B cell (primary cell): ENCODE measurements at regions of chr4 and their contacts with region 1.

Region 1: DNA sequence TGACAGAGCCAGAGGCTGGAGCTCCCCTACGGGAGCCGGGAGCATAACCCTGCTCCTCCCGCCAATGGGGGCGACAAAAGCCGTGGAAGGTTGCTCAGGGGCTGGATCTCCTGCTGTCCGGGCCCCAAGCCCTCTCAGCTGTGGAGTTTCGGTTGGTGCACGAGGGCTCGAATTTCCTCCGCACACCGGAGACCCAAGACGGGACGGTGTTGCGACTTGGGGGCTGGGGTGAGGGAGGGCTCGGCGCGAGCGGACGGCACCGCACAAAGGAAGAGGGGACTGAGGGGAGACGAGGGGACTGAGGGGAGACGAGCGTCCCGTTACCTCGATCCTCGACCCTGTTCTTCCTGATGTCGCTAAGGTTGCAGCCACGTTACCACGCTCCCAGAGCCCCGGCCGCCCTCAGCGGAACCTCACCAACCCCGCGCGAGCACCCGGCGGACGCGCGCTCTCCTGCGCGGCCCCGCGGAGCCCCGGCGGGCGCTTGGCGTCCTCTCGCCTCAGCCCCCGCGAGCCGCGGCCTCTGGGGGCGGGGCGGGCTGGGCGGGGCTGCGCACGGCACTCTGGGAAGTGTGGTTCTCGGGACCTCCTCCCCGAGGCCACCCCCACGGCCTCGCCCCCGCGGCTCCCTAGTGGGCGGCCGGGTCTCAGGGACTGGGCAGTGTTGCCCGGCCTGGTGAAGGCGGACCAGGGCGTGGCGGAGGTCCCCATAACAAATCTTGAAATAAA is at the start of gene KLHL8:
- DNase-seq: peak; percentile 92
- ATAC-seq: peak; percentile 93
- H3K4me3 ChIP-seq: peak within 1 kb of the TSS; percentile 76 to 100 (median 93)
- H3K4me3 Mint-ChIP-seq: peak within 1 kb of the TSS; percentile 98
- H3K27ac ChIP-seq: peak within 1 kb of the TSS; percentile 80 to 85
- H3K27ac Mint-ChIP-seq: peak within 1 kb of the TSS; percentile 96
- H3K4me1 ChIP-seq: peaks cover 7% of the 10 kb centered on the region in 2 donors
- H3K4me1 Mint-ChIP-seq: peaks cover 16% of the 10 kb centered on the region
- H3K27me3 ChIP-seq: no peaks in the 10 kb centered on the region
- H3K27me3 Mint-ChIP-seq: no peaks in the 10 kb centered on the region
- CTCF ChIP-seq: no peak
- total RNA-seq, gene KLHL8: 12.4 and 14.3 TPM in 2 replicates

Region 2: GRCh38 chr4:86359944-86360478 is 860.2 kb before region 1 on chr4 and contains the start of gene MAPK10:
- CTCF ChIA-PET with region 1: no interaction called
- POLR2A ChIA-PET with region 1: no interaction called
- intact Hi-C with region 1: loop called (anchors 5 kb)
- DNase-seq: peak; percentile 95
- ATAC-seq: peak; percentile 97
- H3K4me3 ChIP-seq: peak within 1 kb of the TSS; percentile 38 to 63 (median 56)
- H3K4me3 Mint-ChIP-seq: peak within 1 kb of the TSS; percentile 90
- H3K27ac ChIP-seq: peak within 1 kb of the TSS; percentile 50 to 74
- H3K27ac Mint-ChIP-seq: peak within 1 kb of the TSS; percentile 91
- H3K4me1 ChIP-seq: peaks cover 8 to 10% of the 10 kb centered on the region in 2 donors
- H3K4me1 Mint-ChIP-seq: peaks cover 19% of the 10 kb centered on the region
- H3K27me3 ChIP-seq: no peaks in the 10 kb centered on the region
- H3K27me3 Mint-ChIP-seq: no peaks in the 10 kb centered on the region
- CTCF ChIP-seq: no peak
- total RNA-seq, gene MAPK10: 3.1 and 3.7 TPM in 2 replicates

Region 3: GRCh38 chr4:87209696-87210095 is 10.6 kb before region 1 on chr4:
- CTCF ChIA-PET with region 1: interaction called, 14 read pairs
- POLR2A ChIA-PET with region 1: interaction called, 13 read pairs
- intact Hi-C with region 1: loop called (anchors 1 kb)
- DNase-seq: peak; percentile 75
- ATAC-seq: peak; percentile 93
- H3K4me3 ChIP-seq: peak overlapping the region in 4 of 5 experiments; percentile 34 to 75 (median 48)
- H3K4me3 Mint-ChIP-seq: peak overlapping the region; percentile 85
- H3K27ac ChIP-seq: peak overlapping the region; percentile 3 to 56
- H3K27ac Mint-ChIP-seq: peak overlapping the region; percentile 83
- H3K4me1 ChIP-seq: peaks cover 7 to 11% of the 10 kb centered on the region in 2 donors
- H3K4me1 Mint-ChIP-seq: peaks cover 16% of the 10 kb centered on the region
- H3K27me3 ChIP-seq: no peaks in the 10 kb centered on the region
- H3K27me3 Mint-ChIP-seq: no peaks in the 10 kb centered on the region
- CTCF ChIP-seq: no peak

Region 4: GRCh38 chr4:87235020-87235671 is 14.9 kb after region 1 on chr4:
- CTCF ChIA-PET with region 1: interaction called, 8 read pairs
- POLR2A ChIA-PET with region 1: no interaction called
- intact Hi-C with region 1: loop called (anchors 1 kb)
- DNase-seq: peak; percentile 12
- ATAC-seq: no peak
- H3K4me3 ChIP-seq: peak overlapping the region in 4 of 5 experiments; percentile 35 to 66 (median 44)
- H3K4me3 Mint-ChIP-seq: peak overlapping the region; percentile 74
- H3K27ac ChIP-seq: no peak overlapping the region
- H3K27ac Mint-ChIP-seq: no peak overlapping the region
- H3K4me1 ChIP-seq: peaks cover 0 to 6% of the 10 kb centered on the region in 2 donors
- H3K4me1 Mint-ChIP-seq: peaks cover 4% of the 10 kb centered on the region
- H3K27me3 ChIP-seq: no peaks in the 10 kb centered on the region
- H3K27me3 Mint-ChIP-seq: peaks cover 5% of the 10 kb centered on the region
- CTCF ChIP-seq: no peak

Region 5: GRCh38 chr4:87422104-87423052 is 202.1 kb after region 1 on chr4 and contains the start of gene NUDT9:
- CTCF ChIA-PET with region 1: no interaction called
- POLR2A ChIA-PET with region 1: no interaction called
- intact Hi-C with region 1: loop called (anchors 5 kb)
- DNase-seq: peak; percentile 93
- ATAC-seq: peak; percentile 85
- H3K4me3 ChIP-seq: peak within 1 kb of the TSS; percentile 86 to 97 (median 89)
- H3K4me3 Mint-ChIP-seq: peak within 1 kb of the TSS; percentile 100
- H3K27ac ChIP-seq: peak within 1 kb of the TSS; percentile 80 to 92
- H3K27ac Mint-ChIP-seq: peak within 1 kb of the TSS; percentile 100
- H3K4me1 ChIP-seq: peaks cover 16 to 26% of the 10 kb centered on the region in 2 donors
- H3K4me1 Mint-ChIP-seq: peaks cover 40% of the 10 kb centered on the region
- H3K27me3 ChIP-seq: no peaks in the 10 kb centered on the region
- H3K27me3 Mint-ChIP-seq: no peaks in the 10 kb centered on the region
- CTCF ChIP-seq: no peak
- total RNA-seq, gene NUDT9: 17.5 and 21.5 TPM in 2 replicates

Region 6: DNA sequence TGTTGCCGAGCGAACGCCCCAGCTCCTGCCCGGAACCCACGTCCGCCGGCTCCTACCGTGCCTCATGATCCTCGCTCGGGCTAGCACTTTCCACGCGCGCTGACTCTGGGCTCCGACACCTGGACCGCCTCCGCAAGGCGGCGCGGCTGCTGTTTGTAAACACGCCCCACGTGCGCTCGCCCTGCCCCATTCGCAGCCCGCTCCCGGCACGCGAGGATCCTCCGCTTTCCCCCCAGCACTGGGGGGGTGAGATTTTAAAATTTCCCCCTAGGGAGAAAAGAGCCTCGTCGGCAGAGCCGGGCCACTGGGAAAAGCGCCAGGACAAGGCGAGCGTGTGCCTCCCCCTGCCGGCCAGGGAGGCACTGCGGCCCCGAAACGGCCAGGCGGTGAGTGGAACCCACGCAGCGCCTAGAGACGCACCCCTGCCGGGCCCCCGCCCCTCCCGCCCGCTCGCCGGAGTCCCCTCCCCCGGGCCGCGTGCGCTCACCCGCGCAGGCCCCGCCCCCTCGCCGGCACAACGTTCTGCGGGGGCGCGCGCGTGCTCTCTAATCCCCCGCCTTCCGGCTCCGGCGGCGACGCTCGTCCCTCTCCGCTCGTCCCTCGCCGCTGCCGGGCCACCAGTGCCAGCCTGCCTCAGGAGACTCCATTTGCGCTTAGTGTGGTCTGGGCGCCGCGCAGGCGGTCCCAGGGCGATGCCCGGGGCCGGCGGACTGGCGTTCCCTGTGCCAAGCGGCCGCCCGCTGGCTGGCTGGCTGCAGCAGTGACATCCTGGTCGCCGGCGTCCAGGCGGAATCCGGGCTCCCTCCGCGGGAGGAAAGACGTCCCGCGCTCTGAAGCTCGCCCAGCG is 1891.0 kb after region 1 on chr4 and contains the start of gene TIGD2:
- CTCF ChIA-PET with region 1: no interaction called
- POLR2A ChIA-PET with region 1: no interaction called
- intact Hi-C with region 1: loop called (anchors 2 kb)
- DNase-seq: peak; percentile 94
- ATAC-seq: peak; percentile 92
- H3K4me3 ChIP-seq: peak within 1 kb of the TSS; percentile 70 to 88 (median 82)
- H3K4me3 Mint-ChIP-seq: peak within 1 kb of the TSS; percentile 88
- H3K27ac ChIP-seq: peak within 1 kb of the TSS; percentile 30 to 85
- H3K27ac Mint-ChIP-seq: peak within 1 kb of the TSS; percentile 85
- H3K4me1 ChIP-seq: peaks cover 14 to 18% of the 10 kb centered on the region in 2 donors
- H3K4me1 Mint-ChIP-seq: peaks cover 27% of the 10 kb centered on the region
- H3K27me3 ChIP-seq: peaks cover 0 to 4% (median 1%) of the 10 kb centered on the region in 4 experiments
- H3K27me3 Mint-ChIP-seq: peaks cover 2% of the 10 kb centered on the region
- CTCF ChIP-seq: peak; percentile 94
- total RNA-seq, gene TIGD2: 8.6 and 9.5 TPM in 2 replicates